Endothelial cell of umbilical vein (primary cell): ENCODE measurements at regions of chr18 and their contacts with region 1.

Region 1: GRCh38 chr18:61833387-61833786 is 59.4 kb downstream of the RNF152 start:
- DNase-seq: peak; percentile 93
- H3K4me3 ChIP-seq: peak overlapping the region in 1 of 3 experiments; percentile 31
- H3K27ac ChIP-seq: peak overlapping the region; percentile 75
- H3K4me1 ChIP-seq: peaks cover 43% of the 10 kb centered on the region
- H3K27me3 ChIP-seq: no peaks in the 10 kb centered on the region
- CTCF ChIP-seq: no peak
- POLR2A ChIP-seq: no peak

Region 2: DNA sequence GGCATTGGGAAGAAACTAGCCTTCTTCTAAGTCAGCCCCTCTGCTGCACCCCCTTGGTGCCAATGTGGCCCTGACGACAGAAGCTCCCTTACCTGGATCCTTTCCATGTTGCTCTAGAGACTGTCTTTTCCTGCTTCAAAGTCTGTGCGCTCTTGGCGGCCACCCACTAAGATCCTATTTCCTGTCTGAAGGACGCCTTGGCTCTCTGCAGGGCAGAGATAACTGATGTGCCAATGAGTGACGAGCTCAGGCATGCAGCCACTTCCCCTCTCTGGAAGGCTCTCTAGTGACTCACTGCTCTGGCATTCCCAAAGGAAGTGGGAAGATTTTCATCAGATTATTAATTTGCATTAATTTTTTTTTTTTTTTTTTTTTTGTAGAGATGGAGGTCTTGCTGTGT is 226.6 kb before region 1 on chr18:
- CTCF ChIA-PET with region 1: no interaction called
- POLR2A ChIA-PET with region 1: no interaction called
- dilution Hi-C with region 1: no loop called
- intact Hi-C with region 1: loop called (anchors 1 kb)
- DNase-seq: peak; percentile 98
- H3K4me3 ChIP-seq: peak overlapping the region in 1 of 3 experiments; percentile 6
- H3K27ac ChIP-seq: peak overlapping the region; percentile 97
- H3K4me1 ChIP-seq: peaks cover 71% of the 10 kb centered on the region
- H3K27me3 ChIP-seq: no peaks in the 10 kb centered on the region
- CTCF ChIP-seq: no peak
- POLR2A ChIP-seq: peak; percentile 87

Region 3: GRCh38 chr18:61690418-61691138 is 142.8 kb before region 1 on chr18:
- CTCF ChIA-PET with region 1: no interaction called
- POLR2A ChIA-PET with region 1: no interaction called
- dilution Hi-C with region 1: no loop called
- intact Hi-C with region 1: loop called (anchors 2 kb)
- DNase-seq: no peak
- H3K4me3 ChIP-seq: no peak overlapping the region
- H3K27ac ChIP-seq: no peak overlapping the region
- H3K4me1 ChIP-seq: peaks cover 16% of the 10 kb centered on the region
- H3K27me3 ChIP-seq: no peaks in the 10 kb centered on the region
- CTCF ChIP-seq: no peak
- POLR2A ChIP-seq: no peak

Region 4: GRCh38 chr18:61719671-61720070 is 113.7 kb before region 1 on chr18:
- CTCF ChIA-PET with region 1: no interaction called
- POLR2A ChIA-PET with region 1: no interaction called
- dilution Hi-C with region 1: no loop called
- intact Hi-C with region 1: loop called (anchors 1 kb)
- DNase-seq: peak; percentile 88
- H3K4me3 ChIP-seq: no peak overlapping the region
- H3K27ac ChIP-seq: peak overlapping the region; percentile 33
- H3K4me1 ChIP-seq: peaks cover 19% of the 10 kb centered on the region
- H3K27me3 ChIP-seq: no peaks in the 10 kb centered on the region
- CTCF ChIP-seq: no peak
- POLR2A ChIP-seq: peak; percentile 42

Region 5: GRCh38 chr18:61893971-61894750 is 60.8 kb after region 1 on chr18:
- CTCF ChIA-PET with region 1: interaction called, 15 read pairs
- POLR2A ChIA-PET with region 1: interaction called, 3 read pairs
- dilution Hi-C with region 1: no loop called
- intact Hi-C with region 1: loop called (anchors 1 kb)
- DNase-seq: peak; percentile 82
- H3K4me3 ChIP-seq: peak overlapping the region; percentile 83 to 98 (median 87)
- H3K27ac ChIP-seq: peak overlapping the region; percentile 67
- H3K4me1 ChIP-seq: peaks cover 21% of the 10 kb centered on the region
- H3K27me3 ChIP-seq: no peaks in the 10 kb centered on the region
- CTCF ChIP-seq: peak in 1 of 2 donors; percentile 44
- POLR2A ChIP-seq: peak; percentile 82

Region 6: DNA sequence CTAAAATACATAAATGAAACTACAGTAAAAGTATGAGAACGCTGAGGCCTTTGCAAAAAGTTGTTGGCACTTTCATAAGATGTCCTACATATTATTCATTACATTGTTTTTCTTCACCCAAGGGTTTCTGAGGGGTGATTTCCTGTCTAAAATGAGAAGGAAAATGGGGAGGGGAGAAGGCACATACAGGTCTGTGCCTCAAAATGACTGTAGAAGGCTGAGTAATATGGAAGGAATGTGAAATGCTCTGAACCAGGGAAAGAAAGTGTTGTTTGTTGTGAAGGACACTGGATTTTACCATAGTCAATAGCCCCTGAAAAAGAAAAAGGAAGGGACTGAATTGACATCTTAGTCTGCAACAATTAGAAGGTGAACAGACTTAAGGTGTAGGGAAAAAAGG is 158.9 kb after region 1 on chr18:
- CTCF ChIA-PET with region 1: no interaction called
- POLR2A ChIA-PET with region 1: no interaction called
- dilution Hi-C with region 1: no loop called
- intact Hi-C with region 1: loop called (anchors 5 kb)
- DNase-seq: peak; percentile 95
- H3K4me3 ChIP-seq: peak overlapping the region in 1 of 3 experiments; percentile 13
- H3K27ac ChIP-seq: peak overlapping the region; percentile 98
- H3K4me1 ChIP-seq: peaks cover 58% of the 10 kb centered on the region
- H3K27me3 ChIP-seq: no peaks in the 10 kb centered on the region
- CTCF ChIP-seq: no peak
- POLR2A ChIP-seq: peak; percentile 33

Region 7: GRCh38 chr18:62312851-62313250 is 479.5 kb after region 1 on chr18:
- CTCF ChIA-PET with region 1: no interaction called
- POLR2A ChIA-PET with region 1: no interaction called
- dilution Hi-C with region 1: no loop called
- intact Hi-C with region 1: no loop called
- DNase-seq: no peak
- H3K4me3 ChIP-seq: no peak overlapping the region
- H3K27ac ChIP-seq: no peak overlapping the region
- H3K4me1 ChIP-seq: no peaks in the 10 kb centered on the region
- H3K27me3 ChIP-seq: no peaks in the 10 kb centered on the region
- CTCF ChIP-seq: no peak
- POLR2A ChIP-seq: no peak